Kidney (tissue), 22 donors: ENCODE measurements at regions of chr15 and their contacts with region 1.

Region 1: DNA sequence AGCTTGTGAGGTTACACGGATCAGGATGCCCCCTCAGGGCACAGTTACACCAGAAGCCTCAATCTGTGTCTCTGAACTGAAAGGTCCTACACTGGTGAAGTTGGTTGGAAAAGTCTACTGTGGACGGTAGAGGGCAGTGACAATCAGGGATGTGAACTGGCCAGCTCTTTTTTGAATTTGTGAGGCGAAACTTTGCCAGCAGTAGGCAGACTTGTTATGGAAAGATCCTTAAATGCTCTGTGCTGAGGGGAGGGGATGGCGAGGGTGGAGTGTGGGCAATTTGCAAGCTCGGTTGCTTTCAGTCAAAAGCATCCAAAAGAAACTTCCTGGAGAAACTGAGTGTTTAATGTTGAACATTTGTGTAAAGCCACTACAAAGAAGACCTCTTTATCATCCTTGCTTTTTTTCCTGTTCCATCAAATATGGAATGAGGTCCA is 127.4 kb upstream of the ABHD17C start:
- DNase-seq: peak in 4 of 5 donors; percentile 61 to 92 (median 82)
- H3K4me3 ChIP-seq: no peak overlapping the region
- H3K27ac ChIP-seq: no peak overlapping the region
- H3K4me1 ChIP-seq: no peaks in the 10 kb centered on the region
- H3K27me3 ChIP-seq: no peaks in the 10 kb centered on the region
- CTCF ChIP-seq: peak; percentile 78

Region 2: DNA sequence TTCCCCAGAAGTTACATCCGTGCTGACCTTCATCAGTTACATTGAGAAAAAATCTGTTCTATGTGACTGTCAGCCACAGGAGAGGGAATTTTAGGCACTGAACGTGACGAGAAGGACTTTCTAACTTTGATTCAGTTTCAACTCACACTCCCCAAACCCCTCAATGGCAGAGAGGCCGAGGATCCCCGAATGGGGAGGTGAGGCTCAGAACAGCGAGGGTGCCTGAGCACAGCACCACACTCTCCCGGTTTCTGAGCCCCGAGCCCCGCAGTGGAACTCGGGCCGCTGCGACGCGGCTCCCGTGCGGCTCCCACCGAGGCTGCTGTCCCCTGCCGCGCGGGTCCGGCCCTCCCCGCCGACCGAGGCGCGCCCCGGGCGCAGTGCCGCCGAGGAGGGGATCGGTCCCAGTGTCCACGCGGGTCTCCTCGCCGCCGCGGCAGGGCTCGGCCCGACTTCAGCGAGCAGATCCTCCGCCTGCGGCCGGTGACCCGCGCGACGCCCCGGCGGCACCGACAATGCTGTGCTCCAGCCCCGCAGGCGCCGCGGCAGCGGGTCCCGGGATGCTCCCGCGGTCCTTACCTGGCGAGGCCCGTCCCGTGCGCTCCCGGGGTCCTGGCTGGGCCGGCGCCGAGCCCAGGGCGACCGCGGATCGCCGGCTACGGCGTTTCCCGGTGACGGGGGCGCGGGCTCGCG is 316.2 kb before region 1 on chr15:
- intact Hi-C with region 1: no loop called
- DNase-seq: peak in 1 of 5 donors; percentile 35
- H3K4me3 ChIP-seq: peak overlapping the region; percentile 26 to 61 (median 57)
- H3K27ac ChIP-seq: no peak overlapping the region
- H3K4me1 ChIP-seq: peaks cover 0 to 6% (median 6%) of the 10 kb centered on the region in 3 donors
- H3K27me3 ChIP-seq: peaks cover 20% of the 10 kb centered on the region
- CTCF ChIP-seq: no peak

Region 3: GRCh38 chr15:80461356-80462095 is 106.2 kb before region 1 on chr15:
- intact Hi-C with region 1: loop called (anchors 10 kb)
- DNase-seq: no peak
- H3K4me3 ChIP-seq: no peak overlapping the region
- H3K27ac ChIP-seq: no peak overlapping the region
- H3K4me1 ChIP-seq: peaks cover 0 to 5% (median 0%) of the 10 kb centered on the region in 3 donors
- H3K27me3 ChIP-seq: no peaks in the 10 kb centered on the region
- CTCF ChIP-seq: no peak

Region 4: DNA sequence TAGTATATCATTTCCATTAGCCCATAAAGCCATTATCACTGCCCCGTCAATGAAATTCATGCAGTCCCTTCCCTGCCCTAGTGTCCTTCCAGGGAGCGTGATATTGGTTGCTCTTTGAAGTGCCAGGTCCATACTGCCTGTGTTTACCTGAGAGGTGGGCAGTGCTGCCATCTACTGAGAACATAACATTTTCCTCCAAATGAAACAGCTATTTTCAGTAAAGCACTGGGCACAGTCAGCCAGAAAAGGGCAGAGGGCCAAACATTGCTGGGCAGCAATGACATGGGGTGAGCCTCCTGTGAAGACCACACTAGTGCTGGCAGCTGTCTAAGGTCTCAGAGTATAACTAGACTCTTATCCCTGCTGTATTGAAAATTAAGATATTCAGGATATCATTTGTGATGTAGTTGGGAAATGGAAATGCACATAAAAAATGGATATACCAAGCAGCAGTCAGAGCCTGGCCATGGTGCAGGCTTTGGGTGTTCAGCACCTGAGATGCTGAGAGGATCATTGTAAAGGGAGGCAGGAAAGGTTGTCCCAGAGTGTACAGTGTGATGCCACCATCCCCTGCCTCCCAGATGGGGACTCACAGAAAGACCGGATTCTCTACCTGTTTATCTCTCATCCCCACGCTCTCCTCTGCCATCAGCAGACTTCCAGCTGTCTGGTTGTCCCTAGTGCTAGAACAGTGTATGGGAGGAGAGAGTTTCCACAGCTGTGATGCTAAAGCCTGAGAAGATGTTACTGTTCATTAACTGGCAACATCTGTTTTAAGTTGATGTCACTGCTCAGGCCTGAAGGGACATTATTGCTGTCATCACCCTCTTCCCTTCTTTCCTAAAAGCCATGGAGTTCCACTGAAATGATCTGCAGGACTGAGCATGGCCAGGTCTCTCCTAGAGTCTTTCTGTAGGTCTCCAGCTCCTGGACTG is 54.7 kb before region 1 on chr15:
- intact Hi-C with region 1: no loop called
- DNase-seq: peak in 2 of 5 donors; percentile 36 to 38
- H3K4me3 ChIP-seq: no peak overlapping the region
- H3K27ac ChIP-seq: no peak overlapping the region
- H3K4me1 ChIP-seq: no peaks in the 10 kb centered on the region
- H3K27me3 ChIP-seq: no peaks in the 10 kb centered on the region
- CTCF ChIP-seq: peak; percentile 21

Region 5: DNA sequence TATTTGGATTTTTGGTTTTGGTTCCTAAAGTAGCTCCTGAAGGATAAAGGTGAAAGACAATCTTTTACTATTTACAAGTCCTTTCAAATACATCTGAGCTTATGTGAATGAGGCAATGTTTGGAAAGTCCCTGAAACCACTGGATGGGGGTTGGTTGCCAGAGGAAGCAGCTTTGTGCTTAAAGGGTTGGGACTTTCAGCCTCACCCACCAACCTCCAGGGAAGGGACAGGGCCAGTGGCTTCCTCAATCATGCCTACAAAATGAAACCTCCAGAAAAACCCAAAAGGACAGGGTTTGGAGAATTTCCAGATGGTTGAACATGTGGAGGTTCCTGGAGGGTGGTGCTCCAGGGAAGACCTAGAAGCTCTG is 106.5 kb after region 1 on chr15:
- intact Hi-C with region 1: no loop called
- DNase-seq: no peak
- H3K4me3 ChIP-seq: no peak overlapping the region
- H3K27ac ChIP-seq: no peak overlapping the region
- H3K4me1 ChIP-seq: no peaks in the 10 kb centered on the region
- H3K27me3 ChIP-seq: no peaks in the 10 kb centered on the region
- CTCF ChIP-seq: no peak

Region 6: GRCh38 chr15:80699981-80700380 is 132.2 kb after region 1 on chr15:
- intact Hi-C with region 1: no loop called
- DNase-seq: no peak
- H3K4me3 ChIP-seq: no peak overlapping the region
- H3K27ac ChIP-seq: no peak overlapping the region
- H3K4me1 ChIP-seq: peaks cover 0 to 10% (median 7%) of the 10 kb centered on the region in 3 donors
- H3K27me3 ChIP-seq: no peaks in the 10 kb centered on the region
- CTCF ChIP-seq: no peak

Region 7: GRCh38 chr15:80780416-80781221 is 212.9 kb after region 1 on chr15:
- intact Hi-C with region 1: loop called (anchors 10 kb)
- DNase-seq: peak; percentile 82 to 90 (median 84)
- H3K4me3 ChIP-seq: peak overlapping the region in 2 of 3 donors; percentile 6 to 49
- H3K27ac ChIP-seq: no peak overlapping the region
- H3K4me1 ChIP-seq: peaks cover 0 to 16% (median 0%) of the 10 kb centered on the region in 3 donors
- H3K27me3 ChIP-seq: peaks cover 6% of the 10 kb centered on the region
- CTCF ChIP-seq: no peak